Activated naive CD4-positive, alpha-beta T cell treated with anti-CD3 and anti-CD28 coated beads, Interleukin-2, amount 10 ng/mL, durations not matched to agents 7 days and 5 days (primary cell): ENCODE measurements at regions of chr2 and their contacts with region 1.

Region 1: GRCh38 chr2:10331027-10331701 is 28.5 kb downstream of the HPCAL1 start:
- DNase-seq: peak; percentile 85
- H3K4me3 Mint-ChIP-seq: peak overlapping the region; percentile 85
- H3K27ac Mint-ChIP-seq: peak overlapping the region; percentile 93
- H3K4me1 Mint-ChIP-seq: peaks cover 76% of the 10 kb centered on the region
- H3K27me3 Mint-ChIP-seq: peaks cover 6% of the 10 kb centered on the region

Region 2: DNA sequence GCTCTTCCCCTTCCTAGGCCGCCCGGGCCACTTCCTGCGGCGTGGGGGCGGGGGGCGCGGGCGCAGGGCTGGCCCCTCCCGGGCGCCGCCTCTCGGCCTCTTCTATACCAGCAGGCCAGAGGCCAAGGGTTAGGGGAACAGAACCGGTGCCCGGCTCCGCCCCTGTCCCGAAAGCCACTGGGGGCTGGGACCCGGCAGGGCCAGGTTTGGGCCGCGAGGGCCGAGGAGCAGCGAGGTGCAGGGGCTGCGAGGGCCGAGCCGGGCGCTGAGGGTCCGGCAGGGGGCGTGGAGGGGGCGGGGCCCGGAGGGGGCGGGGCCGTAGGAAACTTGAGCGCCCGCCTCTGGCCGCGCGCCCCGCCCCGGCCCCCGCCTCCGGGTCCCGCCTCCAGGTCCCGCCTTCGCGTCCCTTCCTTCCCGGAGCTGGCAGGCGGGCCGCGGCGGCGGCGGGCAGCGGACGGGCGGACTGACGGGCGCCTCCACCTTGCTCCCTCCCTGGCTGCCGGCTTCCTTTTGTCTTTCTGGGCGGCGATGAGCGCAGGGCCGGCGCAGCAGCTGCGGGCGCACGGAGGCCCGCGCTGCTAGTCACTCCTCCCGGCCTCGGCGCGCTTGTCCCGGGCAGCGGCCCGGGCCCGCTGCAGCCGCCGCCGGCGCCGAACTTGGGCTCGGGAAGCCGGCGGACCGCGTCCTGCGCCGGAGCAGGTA is 28.5 kb before region 1 on chr2 and contains the start of gene HPCAL1:
- CTCF ChIA-PET with region 1: interaction called, 22 read pairs
- DNase-seq: peak; percentile 88
- H3K4me3 Mint-ChIP-seq: peak within 1 kb of the TSS; percentile 98
- H3K27ac Mint-ChIP-seq: peak within 1 kb of the TSS; percentile 91
- H3K4me1 Mint-ChIP-seq: peaks cover 76% of the 10 kb centered on the region
- H3K27me3 Mint-ChIP-seq: no peaks in the 10 kb centered on the region

Region 3: GRCh38 chr2:10486601-10487079 is 155.5 kb after region 1 on chr2:
- CTCF ChIA-PET with region 1: no interaction called
- DNase-seq: no peak
- H3K4me3 Mint-ChIP-seq: no peak overlapping the region
- H3K27ac Mint-ChIP-seq: no peak overlapping the region
- H3K4me1 Mint-ChIP-seq: no peaks in the 10 kb centered on the region
- H3K27me3 Mint-ChIP-seq: peaks cover 69% of the 10 kb centered on the region

Region 4: DNA sequence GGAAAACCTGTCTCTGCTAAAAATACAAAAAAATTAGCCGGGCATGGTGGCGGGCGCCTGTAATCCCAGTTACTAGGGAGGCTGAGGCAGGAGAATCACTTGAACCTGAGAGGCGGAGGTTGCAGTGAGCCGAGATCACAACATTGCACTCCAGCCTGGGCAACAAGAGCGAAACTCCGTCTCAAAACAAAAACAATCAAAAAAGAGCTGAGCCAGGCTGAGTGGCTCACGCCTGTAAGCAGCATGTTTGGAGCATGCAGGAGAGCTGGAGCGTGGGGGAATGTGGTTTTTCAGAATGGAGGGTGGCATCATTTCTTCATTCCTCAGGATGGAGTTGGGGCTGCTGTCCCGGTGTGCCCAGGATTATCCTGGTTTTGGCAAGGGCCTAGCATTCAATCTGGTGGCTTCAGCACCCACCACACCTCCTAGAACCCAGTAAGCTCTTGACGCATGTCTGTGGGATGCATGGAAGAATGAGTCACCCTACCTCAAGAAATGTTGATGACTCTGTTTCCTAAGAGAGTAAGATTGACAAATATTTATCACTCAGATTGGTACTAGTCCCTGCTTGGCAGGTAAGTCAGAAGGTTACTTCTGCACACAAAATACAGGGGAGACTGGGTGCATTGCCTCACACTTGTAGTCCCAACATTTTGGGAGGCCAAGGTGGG is 207.2 kb after region 1 on chr2:
- CTCF ChIA-PET with region 1: no interaction called
- DNase-seq: no peak
- H3K4me3 Mint-ChIP-seq: no peak overlapping the region
- H3K27ac Mint-ChIP-seq: no peak overlapping the region
- H3K4me1 Mint-ChIP-seq: peaks cover 18% of the 10 kb centered on the region
- H3K27me3 Mint-ChIP-seq: peaks cover 69% of the 10 kb centered on the region